ENCODE measurements at regions of chr15 and their contacts with region 1.

Region 1: GRCh38 chr15:78149068-78149804 is at the start of gene IDH3A:
- DNase-seq: peak; percentile 100
- ATAC-seq: peak; percentile 94
- H3K4me3 Mint-ChIP-seq: peak within 1 kb of the TSS; percentile 95
- H3K27ac Mint-ChIP-seq: peak within 1 kb of the TSS; percentile 96
- H3K4me1 Mint-ChIP-seq: peaks cover 41% of the 10 kb centered on the region
- H3K27me3 Mint-ChIP-seq: no peaks in the 10 kb centered on the region
- total RNA-seq, gene IDH3A: 129 to 135 TPM

Region 2: DNA sequence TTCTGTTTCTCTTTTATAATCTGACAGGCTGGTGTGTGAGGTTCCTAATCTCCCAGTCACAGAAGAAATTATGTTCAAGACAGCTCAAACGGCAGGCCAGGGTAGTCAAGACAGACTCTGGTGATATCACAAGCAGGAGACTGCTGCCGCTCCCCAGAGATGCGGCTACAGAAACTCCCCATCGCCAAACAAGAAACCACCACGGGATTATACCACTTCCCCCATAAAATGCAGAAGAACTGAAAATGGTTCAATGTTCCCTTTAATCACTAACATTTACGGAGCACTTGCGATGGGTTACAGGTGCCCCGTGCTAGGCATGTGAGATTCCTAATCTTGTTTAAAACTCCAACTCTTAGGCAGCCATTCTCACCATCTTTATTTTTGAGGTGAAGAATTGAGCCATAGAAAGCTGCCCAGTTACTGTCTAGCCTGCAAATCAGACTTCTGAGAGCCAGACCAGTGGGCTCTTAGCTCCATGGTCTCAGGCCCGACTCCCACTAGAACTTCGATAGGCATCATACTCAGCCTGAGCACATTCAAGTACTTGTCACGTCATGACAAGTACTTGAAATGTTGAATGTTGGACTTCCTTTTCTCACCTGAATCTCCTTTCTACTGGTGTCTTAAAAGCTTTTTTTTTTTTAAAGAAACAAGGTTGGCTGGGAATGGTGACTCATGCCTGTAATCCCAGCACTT is 130.1 kb before region 1 on chr15:
- CTCF ChIA-PET with region 1: no interaction called
- POLR2A ChIA-PET with region 1: no interaction called
- intact Hi-C with region 1: no loop called
- DNase-seq: no peak
- ATAC-seq: peak; percentile 74
- H3K4me3 Mint-ChIP-seq: no peak overlapping the region
- H3K27ac Mint-ChIP-seq: peak overlapping the region; percentile 15
- H3K4me1 Mint-ChIP-seq: peaks cover 14% of the 10 kb centered on the region
- H3K27me3 Mint-ChIP-seq: no peaks in the 10 kb centered on the region

Region 3: GRCh38 chr15:78061963-78062435 is 87.2 kb before region 1 on chr15:
- CTCF ChIA-PET with region 1: no interaction called
- POLR2A ChIA-PET with region 1: no interaction called
- intact Hi-C with region 1: no loop called
- DNase-seq: peak; percentile 66
- ATAC-seq: peak; percentile 75
- H3K4me3 Mint-ChIP-seq: peak overlapping the region; percentile 63
- H3K27ac Mint-ChIP-seq: peak overlapping the region; percentile 77
- H3K4me1 Mint-ChIP-seq: peaks cover 47% of the 10 kb centered on the region
- H3K27me3 Mint-ChIP-seq: no peaks in the 10 kb centered on the region

Region 4: DNA sequence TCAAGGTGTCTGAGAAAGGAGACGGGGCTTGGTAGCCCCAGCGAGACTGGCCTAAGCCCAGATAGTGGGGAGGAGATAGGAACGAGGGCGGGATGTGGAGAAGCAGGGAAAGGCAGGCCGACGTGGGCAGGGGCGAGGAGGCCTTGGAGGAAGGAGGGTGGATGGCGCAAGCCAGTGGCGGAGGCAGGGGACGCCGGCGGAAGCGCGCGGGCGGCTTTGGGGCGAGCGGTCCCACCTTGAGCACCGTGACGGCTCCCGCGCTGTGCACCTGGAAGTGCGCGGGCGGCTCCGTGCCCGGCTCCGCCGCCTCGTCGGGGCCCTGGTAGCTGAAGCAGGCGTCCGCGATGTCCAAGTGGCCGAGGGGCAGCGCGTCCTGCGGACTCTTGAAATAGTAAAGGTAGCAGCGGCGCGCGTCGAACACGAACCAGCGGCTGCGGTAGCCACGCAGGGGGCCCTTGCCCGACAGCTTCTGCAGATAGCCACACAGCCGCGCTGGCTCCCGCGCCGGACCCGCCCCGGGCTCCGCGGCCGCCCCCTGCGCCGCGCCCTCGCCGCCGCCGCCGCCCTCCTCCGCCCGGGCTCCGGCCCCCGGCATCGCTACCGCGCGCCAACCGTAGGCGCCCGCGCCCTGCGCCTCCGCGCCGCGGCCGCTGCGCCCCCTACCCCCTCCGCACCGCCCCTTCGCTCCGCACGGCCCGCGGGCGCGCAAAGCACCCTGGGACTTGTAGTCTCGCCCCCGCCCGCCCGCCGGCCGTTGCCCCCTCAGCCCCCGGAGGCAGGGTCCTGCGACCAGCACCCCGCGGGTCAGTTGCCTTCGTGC is 72.0 kb before region 1 on chr15 and contains the start of gene TBC1D2B:
- CTCF ChIA-PET with region 1: no interaction called
- POLR2A ChIA-PET with region 1: no interaction called
- intact Hi-C with region 1: loop called in 1 of 2 experiments (anchors 1 kb)
- DNase-seq: peak; percentile 86
- ATAC-seq: peak; percentile 76
- H3K4me3 Mint-ChIP-seq: peak within 1 kb of the TSS; percentile 95
- H3K27ac Mint-ChIP-seq: peak within 1 kb of the TSS; percentile 93
- H3K4me1 Mint-ChIP-seq: peaks cover 44% of the 10 kb centered on the region
- H3K27me3 Mint-ChIP-seq: no peaks in the 10 kb centered on the region
- total RNA-seq, gene TBC1D2B: 49.3 to 52.0 TPM

Region 5: DNA sequence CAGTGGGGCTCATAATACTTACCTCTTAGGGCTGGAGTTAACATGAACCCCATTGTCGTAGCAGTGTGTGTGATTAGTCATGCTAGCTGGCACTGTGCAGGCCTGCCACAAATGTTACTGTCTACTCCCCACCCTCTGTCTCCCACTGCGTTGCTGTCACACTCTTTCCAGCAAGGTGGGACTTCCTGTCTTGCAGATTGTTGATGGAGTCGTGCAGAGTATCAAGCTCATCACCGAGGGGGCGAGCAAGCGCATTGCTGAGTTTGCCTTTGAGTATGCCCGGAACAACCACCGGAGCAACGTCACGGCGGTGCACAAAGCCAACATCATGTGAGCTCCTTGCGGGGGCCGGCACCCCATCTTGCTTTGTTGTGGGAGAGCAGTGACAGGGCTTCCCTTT is 12.8 kb after region 1 on chr15:
- CTCF ChIA-PET with region 1: interaction called, 3 read pairs
- POLR2A ChIA-PET with region 1: interaction called, 5 read pairs
- intact Hi-C with region 1: loop called in 1 of 2 experiments (anchors 1 kb)
- DNase-seq: peak; percentile 74
- ATAC-seq: peak; percentile 96
- H3K4me3 Mint-ChIP-seq: no peak overlapping the region
- H3K27ac Mint-ChIP-seq: peak overlapping the region; percentile 70
- H3K4me1 Mint-ChIP-seq: peaks cover 12% of the 10 kb centered on the region
- H3K27me3 Mint-ChIP-seq: no peaks in the 10 kb centered on the region

Region 6: DNA sequence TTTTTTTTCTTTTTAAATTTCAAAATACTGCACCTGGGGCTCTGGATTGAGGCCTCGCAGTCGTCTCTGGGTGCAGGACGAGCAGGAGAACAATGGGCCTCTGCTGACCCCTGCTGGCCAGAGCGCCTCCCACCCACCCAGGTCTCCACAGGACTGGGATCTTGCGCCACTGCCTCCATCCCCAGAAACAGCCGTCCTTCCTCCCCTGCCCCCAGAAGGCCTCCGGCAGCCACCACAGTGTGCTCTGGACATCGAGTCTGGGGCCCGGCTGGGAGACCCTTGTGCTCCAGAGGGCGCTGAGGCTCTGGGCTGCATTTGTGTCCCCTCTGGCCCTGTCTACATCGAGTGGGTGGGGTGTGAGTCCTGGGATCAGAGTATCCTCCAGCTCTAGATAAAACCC is 91.8 kb after region 1 on chr15:
- CTCF ChIA-PET with region 1: interaction called, 12 read pairs
- POLR2A ChIA-PET with region 1: no interaction called
- intact Hi-C with region 1: no loop called
- DNase-seq: peak; percentile 93
- ATAC-seq: peak; percentile 96
- H3K4me3 Mint-ChIP-seq: no peak overlapping the region
- H3K27ac Mint-ChIP-seq: no peak overlapping the region
- H3K4me1 Mint-ChIP-seq: no peaks in the 10 kb centered on the region
- H3K27me3 Mint-ChIP-seq: no peaks in the 10 kb centered on the region

Region 7: GRCh38 chr15:78506971-78507830 is 358.0 kb after region 1 on chr15 and contains the start of gene HYKK:
- CTCF ChIA-PET with region 1: no interaction called
- POLR2A ChIA-PET with region 1: no interaction called
- intact Hi-C with region 1: loop called in 1 of 2 experiments (anchors 1 kb)
- DNase-seq: peak; percentile 87
- ATAC-seq: peak; percentile 91
- H3K4me3 Mint-ChIP-seq: peak within 1 kb of the TSS; percentile 77
- H3K27ac Mint-ChIP-seq: peak within 1 kb of the TSS; percentile 58
- H3K4me1 Mint-ChIP-seq: peaks cover 22% of the 10 kb centered on the region
- H3K27me3 Mint-ChIP-seq: no peaks in the 10 kb centered on the region
- total RNA-seq, gene HYKK: 2.5 to 4.2 TPM

Region 8: GRCh38 chr15:78872972-78873792 is 723.9 kb after region 1 on chr15:
- CTCF ChIA-PET with region 1: no interaction called
- POLR2A ChIA-PET with region 1: no interaction called
- intact Hi-C with region 1: loop called in 1 of 2 experiments (anchors 5 kb)
- DNase-seq: peak; percentile 96
- ATAC-seq: peak; percentile 80
- H3K4me3 Mint-ChIP-seq: peak overlapping the region; percentile 99
- H3K27ac Mint-ChIP-seq: peak overlapping the region; percentile 99
- H3K4me1 Mint-ChIP-seq: peaks cover 34% of the 10 kb centered on the region
- H3K27me3 Mint-ChIP-seq: no peaks in the 10 kb centered on the region

Region 9: GRCh38 chr15:78979456-78980320 is 830.5 kb after region 1 on chr15:
- CTCF ChIA-PET with region 1: no interaction called
- POLR2A ChIA-PET with region 1: no interaction called
- intact Hi-C with region 1: no loop called
- DNase-seq: peak; percentile 58
- ATAC-seq: peak; percentile 55
- H3K4me3 Mint-ChIP-seq: no peak overlapping the region
- H3K27ac Mint-ChIP-seq: no peak overlapping the region
- H3K4me1 Mint-ChIP-seq: peaks cover 2% of the 10 kb centered on the region
- H3K27me3 Mint-ChIP-seq: peaks cover 5% of the 10 kb centered on the region